Activated naive CD4-positive, alpha-beta T cell treated with anti-CD3 and anti-CD28 coated beads, Interleukin-2, amount 10 ng/mL, durations not matched to agents 7 days and 5 days (primary cell): ENCODE measurements at regions of chr3 and their contacts with region 1.

Region 1: GRCh38 chr3:119240591-119241434 is at the start of gene B4GALT4:
- DNase-seq: peak; percentile 83
- H3K4me3 Mint-ChIP-seq: peak within 1 kb of the TSS; percentile 78
- H3K27ac Mint-ChIP-seq: peak within 1 kb of the TSS; percentile 88
- H3K4me1 Mint-ChIP-seq: peaks cover 46% of the 10 kb centered on the region
- H3K27me3 Mint-ChIP-seq: no peaks in the 10 kb centered on the region

Region 2: DNA sequence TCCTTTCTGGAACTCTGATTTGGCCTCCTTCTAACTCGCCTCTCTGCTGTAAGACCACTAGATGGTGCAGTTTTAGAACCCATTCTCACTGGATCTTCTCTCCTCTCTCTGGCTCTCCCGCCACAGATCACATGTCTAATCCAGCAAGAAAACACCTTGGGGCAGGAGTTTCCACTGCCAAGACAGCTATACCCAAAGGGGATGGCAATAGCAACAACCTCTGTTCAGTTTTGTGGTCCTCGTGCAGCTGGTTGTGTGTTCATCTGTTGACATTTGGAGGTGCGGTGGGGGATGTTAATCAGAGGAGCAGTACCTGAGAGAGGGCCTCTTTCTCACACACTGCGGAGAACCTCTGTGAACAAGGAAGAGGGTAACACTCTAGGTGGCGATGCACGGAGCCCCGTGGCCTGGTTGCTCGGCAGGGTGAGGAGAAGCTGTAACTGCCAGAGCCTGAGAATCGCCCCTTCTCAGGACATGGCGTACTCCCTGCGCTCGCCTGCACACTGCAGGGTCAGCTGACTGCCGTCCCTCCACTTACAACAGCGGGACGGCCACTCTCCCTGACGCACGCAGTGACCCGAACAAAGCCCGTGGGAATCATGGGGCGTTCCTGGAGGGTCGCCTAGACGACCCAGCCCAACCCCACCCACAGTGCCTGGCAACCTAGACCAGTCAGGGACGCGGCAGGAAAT is 95.2 kb before region 1 on chr3 and contains the start of gene TEX55:
- CTCF ChIA-PET with region 1: interaction called, 69 read pairs
- DNase-seq: peak; percentile 34
- H3K4me3 Mint-ChIP-seq: no peak within 1 kb of the TSS
- H3K27ac Mint-ChIP-seq: no peak within 1 kb of the TSS
- H3K4me1 Mint-ChIP-seq: no peaks in the 10 kb centered on the region
- H3K27me3 Mint-ChIP-seq: no peaks in the 10 kb centered on the region

Region 3: GRCh38 chr3:119352849-119353502 is 112.2 kb after region 1 on chr3:
- CTCF ChIA-PET with region 1: interaction called, 13 read pairs
- DNase-seq: no peak
- H3K4me3 Mint-ChIP-seq: no peak overlapping the region
- H3K27ac Mint-ChIP-seq: peak overlapping the region; percentile 70
- H3K4me1 Mint-ChIP-seq: peaks cover 29% of the 10 kb centered on the region
- H3K27me3 Mint-ChIP-seq: peaks cover 16% of the 10 kb centered on the region

Region 4: DNA sequence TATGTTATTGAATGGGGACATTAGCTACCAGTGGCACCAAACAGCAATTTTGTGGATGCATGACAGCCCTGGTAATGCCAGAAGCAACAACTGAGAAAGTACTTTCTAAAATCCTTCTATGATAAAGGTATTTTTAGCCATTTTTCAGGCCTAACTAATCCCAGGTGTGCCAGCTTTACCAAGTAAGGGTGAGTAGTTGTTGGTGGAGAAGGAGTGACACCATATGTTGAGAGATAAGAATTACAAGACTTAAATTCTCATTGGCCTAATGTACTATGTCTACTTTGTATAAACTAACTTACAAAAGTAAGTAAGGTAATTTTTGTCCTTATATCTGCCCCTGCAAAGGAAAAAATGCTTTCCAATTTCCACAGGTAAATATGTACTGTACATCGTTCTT is 440.5 kb after region 1 on chr3:
- CTCF ChIA-PET with region 1: interaction called, 15 read pairs
- DNase-seq: no peak
- H3K4me3 Mint-ChIP-seq: no peak overlapping the region
- H3K27ac Mint-ChIP-seq: no peak overlapping the region
- H3K4me1 Mint-ChIP-seq: peaks cover 11% of the 10 kb centered on the region
- H3K27me3 Mint-ChIP-seq: no peaks in the 10 kb centered on the region

Region 5: GRCh38 chr3:119794971-119795612 is 554.3 kb after region 1 on chr3:
- CTCF ChIA-PET with region 1: no interaction called
- DNase-seq: no peak
- H3K4me3 Mint-ChIP-seq: no peak overlapping the region
- H3K27ac Mint-ChIP-seq: no peak overlapping the region
- H3K4me1 Mint-ChIP-seq: no peaks in the 10 kb centered on the region
- H3K27me3 Mint-ChIP-seq: peaks cover 9% of the 10 kb centered on the region